ENCODE measurements at regions of chr19 and their contacts with region 1.

Region 1: GRCh38 chr19:39778763-39779162 is at the start of gene LEUTX:
- DNase-seq: no peak
- ATAC-seq: no peak
- H3K4me3 ChIP-seq: no peak within 1 kb of the TSS
- H3K27ac ChIP-seq: no peak within 1 kb of the TSS
- H3K4me1 ChIP-seq: no peaks in the 10 kb centered on the region
- H3K27me3 ChIP-seq: peaks cover 86% of the 10 kb centered on the region
- CTCF ChIP-seq: no peak
- total RNA-seq, gene LEUTX: not detected

Region 2: DNA sequence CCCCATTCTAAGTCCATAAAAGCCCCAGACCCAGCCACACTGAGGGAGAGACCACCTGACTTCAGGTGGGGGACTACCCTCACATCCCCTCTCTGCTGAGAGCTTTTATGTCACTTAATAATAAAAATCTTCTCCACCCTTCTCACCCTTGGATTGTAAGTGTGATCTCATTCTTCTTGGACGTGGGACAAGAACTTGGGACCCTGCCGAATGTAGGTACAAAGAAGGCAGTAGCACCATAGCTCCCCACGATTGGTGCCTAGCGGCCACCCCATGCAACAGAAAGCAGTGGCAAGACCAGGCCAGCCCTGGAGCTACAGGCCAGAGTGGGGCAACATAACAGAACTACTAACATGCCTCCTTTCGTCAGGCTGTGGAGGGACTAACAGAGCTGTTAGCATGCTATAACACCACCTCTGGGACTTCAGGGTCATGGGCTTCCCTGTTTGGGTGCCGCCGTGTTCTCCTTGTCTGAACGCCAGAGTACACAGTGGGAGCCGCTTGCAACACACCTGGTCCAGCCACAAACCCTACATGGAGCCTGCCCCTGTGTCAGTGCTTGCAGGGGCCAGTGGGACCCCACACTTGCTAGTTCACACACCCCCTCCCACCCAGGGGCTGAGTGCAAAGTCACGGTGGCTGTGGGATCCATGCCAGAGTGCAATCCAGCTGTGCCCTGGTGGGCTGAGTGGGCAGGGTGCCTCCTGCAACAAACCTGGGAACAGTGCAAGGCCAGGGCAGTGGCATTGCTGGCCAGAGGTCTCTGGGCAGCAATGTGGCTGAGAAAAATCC is 798.0 kb before region 1 on chr19:
- CTCF ChIA-PET with region 1: interaction called, 5 read pairs
- POLR2A ChIA-PET with region 1: no interaction called
- in situ Hi-C with region 1: loop called (anchors 5 kb)
- intact Hi-C with region 1: no loop called
- DNase-seq: no peak
- ATAC-seq: no peak
- H3K4me3 ChIP-seq: no peak overlapping the region
- H3K27ac ChIP-seq: no peak overlapping the region
- H3K4me1 ChIP-seq: peaks cover 27% of the 10 kb centered on the region
- H3K27me3 ChIP-seq: no peaks in the 10 kb centered on the region
- CTCF ChIP-seq: no peak

Region 3: GRCh38 chr19:39014037-39014436 is 764.7 kb before region 1 on chr19:
- CTCF ChIA-PET with region 1: interaction called, 10 read pairs
- POLR2A ChIA-PET with region 1: no interaction called
- in situ Hi-C with region 1: no loop called
- intact Hi-C with region 1: no loop called
- DNase-seq: no peak
- ATAC-seq: peak; percentile 43
- H3K4me3 ChIP-seq: no peak overlapping the region
- H3K27ac ChIP-seq: no peak overlapping the region
- H3K4me1 ChIP-seq: no peaks in the 10 kb centered on the region
- H3K27me3 ChIP-seq: no peaks in the 10 kb centered on the region
- CTCF ChIP-seq: no peak

Region 4: GRCh38 chr19:39064405-39064804 is 714.4 kb before region 1 on chr19:
- CTCF ChIA-PET with region 1: no interaction called
- POLR2A ChIA-PET with region 1: no interaction called
- in situ Hi-C with region 1: loop called (anchors 5 kb)
- intact Hi-C with region 1: no loop called
- DNase-seq: no peak
- ATAC-seq: peak; percentile 6; the same call in 1 of the 2 replicates
- H3K4me3 ChIP-seq: no peak overlapping the region
- H3K27ac ChIP-seq: peak overlapping the region; percentile 40
- H3K4me1 ChIP-seq: peaks cover 10% of the 10 kb centered on the region
- H3K27me3 ChIP-seq: no peaks in the 10 kb centered on the region
- CTCF ChIP-seq: no peak

Region 5: DNA sequence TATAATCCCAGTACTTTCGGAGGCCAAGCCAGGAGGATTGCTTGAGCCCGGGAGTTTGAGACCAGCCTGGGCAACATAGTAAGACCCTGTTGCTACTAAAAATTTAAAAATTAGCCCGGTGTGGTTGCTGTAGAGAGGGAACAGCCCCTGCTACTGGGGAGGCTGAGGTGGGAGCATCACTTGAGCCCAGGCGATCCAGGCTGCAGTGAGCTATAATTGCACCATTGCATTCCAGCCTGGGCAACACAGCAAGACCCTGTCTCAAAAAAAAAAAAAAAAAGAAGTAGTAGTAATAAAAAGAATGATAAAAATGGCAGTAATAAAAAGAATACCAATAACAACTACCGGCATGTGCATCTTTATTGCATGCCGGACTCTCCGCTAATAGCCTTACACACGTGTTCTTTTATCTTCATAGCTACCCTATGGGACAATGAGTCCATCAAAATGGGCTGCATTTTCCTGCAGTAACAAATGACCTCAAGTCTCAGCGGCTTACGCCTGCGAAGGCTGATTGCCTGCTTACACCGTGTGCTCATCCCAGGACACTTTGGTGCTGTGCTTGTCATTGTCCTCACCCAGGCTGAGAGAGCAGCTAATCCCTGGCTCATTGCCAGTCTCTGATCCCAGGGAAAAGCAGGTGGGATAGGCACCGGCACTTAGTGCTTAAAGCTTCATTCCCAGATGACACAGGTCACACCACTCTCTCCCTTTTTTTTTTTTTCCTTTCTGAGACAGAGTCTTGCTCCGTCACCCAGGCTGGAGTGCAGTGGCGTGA is 560.3 kb before region 1 on chr19:
- CTCF ChIA-PET with region 1: no interaction called
- POLR2A ChIA-PET with region 1: no interaction called
- in situ Hi-C with region 1: loop called (anchors 5 kb)
- intact Hi-C with region 1: no loop called
- DNase-seq: no peak
- ATAC-seq: 0 out of 2 replicates have a peak, but pooled peaks have one; percentile 8
- H3K4me3 ChIP-seq: no peak overlapping the region
- H3K27ac ChIP-seq: no peak overlapping the region
- H3K4me1 ChIP-seq: no peaks in the 10 kb centered on the region
- H3K27me3 ChIP-seq: peaks cover 10% of the 10 kb centered on the region
- CTCF ChIP-seq: no peak

Region 6: DNA sequence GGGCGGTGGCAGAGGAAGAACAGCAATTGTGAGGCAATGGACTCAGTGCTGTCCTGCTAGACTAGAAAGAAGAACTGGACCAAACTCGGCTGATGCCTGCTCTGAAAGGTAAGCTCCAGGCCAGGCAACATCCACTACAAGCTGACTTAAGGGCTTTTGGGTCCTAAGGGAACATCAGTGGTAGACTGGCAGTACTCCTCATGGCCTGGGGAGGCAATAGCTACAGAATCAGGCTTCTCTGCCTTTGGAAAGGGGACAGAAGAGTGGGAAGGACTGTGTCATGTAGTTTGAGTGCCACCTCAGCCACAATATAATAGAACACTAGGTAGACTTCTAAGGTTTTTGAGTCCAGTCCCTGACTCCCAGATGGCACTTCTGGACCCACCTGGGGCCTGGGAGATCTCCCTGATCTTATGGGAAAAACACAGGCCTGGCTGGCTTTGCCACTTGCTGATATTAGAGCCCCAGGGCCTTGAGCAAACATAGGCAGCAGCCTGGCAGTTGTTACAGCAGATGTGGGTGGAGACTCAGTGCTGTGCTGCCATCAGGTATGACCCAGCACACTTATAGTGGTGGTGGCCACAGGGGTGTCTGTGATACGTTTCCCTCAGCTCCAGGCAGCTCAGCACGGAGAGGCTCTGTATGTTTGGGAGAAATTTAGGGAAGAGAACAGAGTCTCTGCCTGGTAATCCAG is 31.8 kb before region 1 on chr19:
- CTCF ChIA-PET with region 1: interaction called, 3 read pairs
- POLR2A ChIA-PET with region 1: no interaction called
- in situ Hi-C with region 1: loop called (anchors 5 kb)
- intact Hi-C with region 1: no loop called
- DNase-seq: no peak
- ATAC-seq: peak; percentile 83
- H3K4me3 ChIP-seq: no peak overlapping the region
- H3K27ac ChIP-seq: no peak overlapping the region
- H3K4me1 ChIP-seq: no peaks in the 10 kb centered on the region
- H3K27me3 ChIP-seq: peaks cover 92% of the 10 kb centered on the region
- CTCF ChIP-seq: no peak

Region 7: DNA sequence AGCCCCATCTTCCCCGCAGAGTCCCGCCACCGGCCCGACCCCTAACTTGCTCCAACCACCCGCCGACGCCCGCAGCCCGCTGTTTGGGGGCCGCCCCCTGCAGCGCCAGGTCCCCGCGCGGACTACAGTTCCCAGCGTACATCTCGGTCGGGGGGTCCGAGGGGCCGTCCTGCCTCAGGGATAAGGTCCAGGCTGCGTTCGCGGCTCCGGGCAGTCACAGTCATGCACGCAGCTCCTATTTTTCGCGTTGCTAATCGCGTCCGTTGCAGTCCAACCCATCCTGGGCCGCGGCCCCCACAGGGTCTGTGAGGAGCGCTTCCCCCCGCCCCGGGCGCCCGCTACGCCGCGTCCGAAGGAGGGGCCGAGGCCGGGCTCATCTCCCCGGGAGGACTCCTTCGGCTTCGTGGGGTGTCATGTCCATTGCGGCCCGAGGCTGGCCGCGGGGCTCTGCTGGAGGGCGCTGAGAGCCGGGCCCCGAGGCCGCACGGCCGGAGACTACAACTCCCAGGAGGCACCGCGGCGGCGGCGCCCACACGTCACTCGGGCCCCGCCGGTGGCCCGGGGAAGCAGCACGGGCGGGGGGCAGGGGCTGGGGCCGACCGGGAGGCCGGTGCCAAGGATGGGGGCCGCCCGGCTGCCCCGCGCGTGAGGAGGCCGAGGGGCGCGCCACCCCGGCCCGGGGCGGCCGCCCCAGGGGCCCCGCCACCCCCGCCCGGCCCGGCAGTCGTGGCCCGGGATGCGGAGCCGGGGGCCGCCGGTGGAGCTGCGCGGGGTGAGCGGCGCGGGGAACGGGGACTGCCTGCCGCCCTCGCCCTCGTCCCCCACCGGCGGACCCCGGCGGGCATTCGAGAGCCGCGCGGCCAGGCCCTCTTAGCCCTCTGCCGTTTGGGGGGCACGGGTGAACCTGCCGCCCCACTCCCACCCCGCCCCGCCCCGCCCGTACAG is 412.4 kb after region 1 on chr19 and contains the start of gene MAP3K10:
- CTCF ChIA-PET with region 1: no interaction called
- POLR2A ChIA-PET with region 1: interaction called, 6 read pairs
- in situ Hi-C with region 1: loop called (anchors 5 kb)
- intact Hi-C with region 1: no loop called
- DNase-seq: peak; percentile 99
- ATAC-seq: peak; percentile 97
- H3K4me3 ChIP-seq: peak within 1 kb of the TSS; percentile 36 to 57
- H3K27ac ChIP-seq: peak within 1 kb of the TSS; percentile 49
- H3K4me1 ChIP-seq: peaks cover 23% of the 10 kb centered on the region
- H3K27me3 ChIP-seq: peaks cover 9% of the 10 kb centered on the region
- CTCF ChIP-seq: no peak
- total RNA-seq, gene MAP3K10: 255 TPM